PC-9 (cell line): ENCODE measurements at regions of chr11 and their contacts with region 1.

Region 1: GRCh38 chr11:27472398-27473016 is at the start of gene LGR4:
- DNase-seq: peak; percentile 94 to 95
- H3K4me3 ChIP-seq: peak within 1 kb of the TSS; percentile 92
- H3K27ac ChIP-seq: peak within 1 kb of the TSS; percentile 94
- H3K4me1 ChIP-seq: peaks cover 37% of the 10 kb centered on the region
- H3K27me3 ChIP-seq: no peaks in the 10 kb centered on the region
- CTCF ChIP-seq: no peak
- total RNA-seq, gene LGR4: 33.4 and 37.4 TPM in 2 replicates

Region 2: GRCh38 chr11:27209562-27210005 is 262.9 kb before region 1 on chr11:
- CTCF ChIA-PET with region 1: no interaction called
- POLR2A ChIA-PET with region 1: no interaction called
- intact Hi-C with region 1: loop called (anchors 2 kb)
- DNase-seq: peak; percentile 79 to 95
- H3K4me3 ChIP-seq: no peak overlapping the region
- H3K27ac ChIP-seq: peak overlapping the region; percentile 30
- H3K4me1 ChIP-seq: peaks cover 52% of the 10 kb centered on the region
- H3K27me3 ChIP-seq: no peaks in the 10 kb centered on the region
- CTCF ChIP-seq: no peak

Region 3: DNA sequence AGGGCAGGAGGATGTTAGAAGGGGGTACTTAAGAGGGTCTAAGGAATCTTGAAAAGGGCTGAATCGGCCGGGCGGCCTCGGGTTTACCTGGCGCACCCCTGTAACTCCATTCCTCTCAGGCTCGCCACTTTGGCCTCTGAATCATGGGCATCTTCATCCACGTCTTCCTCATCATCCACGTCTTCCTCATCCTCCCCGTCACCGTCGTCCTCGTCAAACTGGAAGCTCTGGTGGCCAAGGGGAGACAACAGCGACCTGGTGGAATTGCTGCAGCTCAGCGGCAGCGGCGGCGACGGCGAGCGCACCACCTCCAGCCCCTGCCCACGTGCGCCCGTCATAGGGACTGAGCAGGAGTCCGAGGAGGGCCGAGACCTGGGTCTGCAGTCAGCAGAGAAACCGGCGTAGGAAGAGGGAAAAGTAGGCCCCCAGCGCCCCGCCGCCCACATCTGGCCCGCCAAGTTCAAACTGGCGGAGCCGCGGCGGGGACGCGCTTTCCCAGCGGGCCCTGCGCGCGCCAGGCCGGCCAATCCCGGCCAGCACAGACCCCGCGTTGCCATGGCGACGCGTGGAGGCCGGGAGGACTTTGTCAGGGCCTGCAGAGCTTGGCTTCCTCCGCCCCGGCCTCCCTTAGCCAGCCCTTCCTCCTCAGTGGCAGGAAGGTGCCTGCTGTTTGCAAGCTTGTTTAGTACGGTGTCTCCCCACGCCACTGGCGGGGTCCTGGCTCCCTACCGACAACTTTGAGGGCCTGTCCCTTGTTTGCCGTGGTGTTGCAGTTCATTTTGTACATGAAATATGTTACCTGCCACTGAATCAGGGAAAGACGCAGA is 109.5 kb before region 1 on chr11 and contains the start of gene CCDC34:
- CTCF ChIA-PET with region 1: no interaction called
- POLR2A ChIA-PET with region 1: interaction called, 26 read pairs
- intact Hi-C with region 1: loop called (anchors 2 kb)
- DNase-seq: peak; percentile 80 to 90
- H3K4me3 ChIP-seq: peak within 1 kb of the TSS; percentile 75
- H3K27ac ChIP-seq: peak within 1 kb of the TSS; percentile 13; the same call in 1 of the 2 replicates
- H3K4me1 ChIP-seq: peaks cover 24% of the 10 kb centered on the region; the same call in 1 of the 2 replicates
- H3K27me3 ChIP-seq: no peaks in the 10 kb centered on the region
- CTCF ChIP-seq: no peak
- total RNA-seq, gene CCDC34: 21.0 and 33.6 TPM in 2 replicates

Region 4: DNA sequence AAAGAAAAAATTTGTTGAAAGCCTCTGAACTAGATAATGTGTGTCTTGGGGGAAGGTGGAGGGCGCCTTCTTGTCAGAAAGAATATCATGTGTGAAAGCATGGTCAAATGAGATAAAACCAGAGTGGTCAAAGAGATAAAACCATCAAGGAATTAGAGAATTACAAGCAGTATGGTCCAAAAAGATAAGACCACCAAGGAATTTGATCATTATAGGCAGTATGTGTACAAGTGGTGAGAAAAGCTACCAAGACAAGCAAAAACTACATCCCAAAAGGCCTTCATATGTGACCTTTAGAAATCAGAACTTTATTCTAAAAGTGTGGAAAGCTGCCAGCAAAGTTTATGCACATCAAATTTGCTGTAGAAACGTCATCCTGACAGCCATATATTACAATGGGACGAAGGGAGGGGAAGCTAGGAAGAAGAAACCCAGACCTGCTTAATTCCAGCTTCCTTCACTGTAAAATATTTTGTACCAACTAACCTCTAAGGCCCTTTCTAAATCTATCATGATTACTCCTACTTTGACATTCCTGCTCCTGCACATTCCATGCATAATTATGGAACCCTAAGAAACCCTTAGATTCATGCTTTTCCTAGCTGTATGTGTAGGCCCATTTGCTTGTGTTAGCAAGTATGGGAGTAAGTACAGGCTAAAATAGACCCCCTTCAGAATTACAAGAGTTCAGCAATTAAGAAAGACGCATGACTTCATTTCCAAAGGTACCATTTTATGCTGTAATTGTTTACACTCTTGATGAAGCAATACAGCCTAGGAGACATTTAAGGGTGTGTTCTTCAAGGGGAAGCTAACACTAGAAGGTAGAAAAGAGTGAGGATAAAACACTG is 51.6 kb before region 1 on chr11:
- CTCF ChIA-PET with region 1: interaction called, 6 read pairs
- POLR2A ChIA-PET with region 1: interaction called, 30 read pairs
- intact Hi-C with region 1: no loop called
- DNase-seq: no peak
- H3K4me3 ChIP-seq: no peak overlapping the region
- H3K27ac ChIP-seq: 0 out of 2 replicates have a peak overlapping the region, but pooled peaks have one; percentile 0
- H3K4me1 ChIP-seq: peaks cover 46% of the 10 kb centered on the region
- H3K27me3 ChIP-seq: no peaks in the 10 kb centered on the region
- CTCF ChIP-seq: no peak

Region 5: GRCh38 chr11:27437829-27438594 is 34.5 kb before region 1 on chr11:
- CTCF ChIA-PET with region 1: no interaction called
- POLR2A ChIA-PET with region 1: no interaction called
- intact Hi-C with region 1: no loop called
- DNase-seq: no peak
- H3K4me3 ChIP-seq: no peak overlapping the region
- H3K27ac ChIP-seq: no peak overlapping the region
- H3K4me1 ChIP-seq: no peaks in the 10 kb centered on the region
- H3K27me3 ChIP-seq: no peaks in the 10 kb centered on the region
- CTCF ChIP-seq: no peak

Region 6: GRCh38 chr11:28343276-28344233 is 871.0 kb after region 1 on chr11:
- CTCF ChIA-PET with region 1: no interaction called
- POLR2A ChIA-PET with region 1: interaction called, 19 read pairs
- intact Hi-C with region 1: no loop called
- DNase-seq: peak; percentile 38 to 61
- H3K4me3 ChIP-seq: no peak overlapping the region
- H3K27ac ChIP-seq: peak overlapping the region; percentile 81
- H3K4me1 ChIP-seq: peaks cover 37% of the 10 kb centered on the region
- H3K27me3 ChIP-seq: no peaks in the 10 kb centered on the region
- CTCF ChIP-seq: no peak

Region 7: DNA sequence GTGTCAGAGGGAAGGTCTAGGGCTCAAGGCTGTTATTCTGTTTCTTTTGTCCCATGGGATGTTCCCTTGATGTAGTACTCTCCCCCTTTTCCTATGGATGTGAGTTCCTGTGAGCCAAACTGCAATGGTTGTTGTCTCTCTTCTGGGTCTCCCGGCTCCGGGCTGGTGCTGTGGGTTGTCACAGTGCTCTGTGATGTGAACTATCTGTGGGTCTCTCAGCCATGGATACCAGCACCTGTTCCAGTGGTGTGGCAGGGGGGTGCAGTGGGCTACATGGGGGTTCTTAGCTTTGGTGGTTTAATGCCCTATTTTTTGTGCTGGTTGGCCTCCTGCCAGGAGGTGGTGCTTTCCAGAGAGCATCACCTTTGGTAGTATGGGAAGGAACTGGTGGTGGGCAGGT is 1603.2 kb after region 1 on chr11:
- CTCF ChIA-PET with region 1: no interaction called
- POLR2A ChIA-PET with region 1: interaction called, 10 read pairs
- intact Hi-C with region 1: no loop called
- DNase-seq: no peak
- H3K4me3 ChIP-seq: no peak overlapping the region
- H3K27ac ChIP-seq: no peak overlapping the region
- H3K4me1 ChIP-seq: no peaks in the 10 kb centered on the region
- H3K27me3 ChIP-seq: no peaks in the 10 kb centered on the region
- CTCF ChIP-seq: no peak